ENCODE measurements at regions of chr21 and their contacts with region 1.

Region 1: GRCh38 chr21:45820171-45821091 is 161.1 kb upstream of the COL6A1 start:
- DNase-seq: peak; percentile 91
- ATAC-seq: peak; percentile 84
- H3K4me3 ChIP-seq: no peak overlapping the region
- H3K27ac ChIP-seq: no peak overlapping the region; the same call in 1 of the 2 replicates
- H3K4me1 ChIP-seq: peaks cover 16% of the 10 kb centered on the region
- H3K27me3 ChIP-seq: no peaks in the 10 kb centered on the region; the same call in 1 of the 2 replicates
- CTCF ChIP-seq: peak; percentile 98
- POLR2A ChIP-seq: no peak
- RAD21 ChIP-seq: peak; percentile 97

Region 2: GRCh38 chr21:45287438-45288391 is 532.7 kb before region 1 on chr21 and contains the start of gene POFUT2:
- CTCF ChIA-PET with region 1: no interaction called
- POLR2A ChIA-PET with region 1: no interaction called
- dilution Hi-C with region 1: no loop called
- in situ Hi-C with region 1: loop called (anchors 5 kb)
- intact Hi-C with region 1: loop called (anchors 1 kb)
- DNase-seq: peak; percentile 92
- ATAC-seq: peak; percentile 75
- H3K4me3 ChIP-seq: peak within 1 kb of the TSS; percentile 93
- H3K27ac ChIP-seq: peak within 1 kb of the TSS; percentile 97
- H3K4me1 ChIP-seq: peaks cover 11% of the 10 kb centered on the region
- H3K27me3 ChIP-seq: no peaks in the 10 kb centered on the region
- CTCF ChIP-seq: 0 out of 2 replicates have a peak, but pooled peaks have one; percentile 15
- POLR2A ChIP-seq: peak; percentile 96
- RAD21 ChIP-seq: no peak
- total RNA-seq, gene POFUT2: 18.8 and 23.9 TPM in 2 replicates

Region 3: DNA sequence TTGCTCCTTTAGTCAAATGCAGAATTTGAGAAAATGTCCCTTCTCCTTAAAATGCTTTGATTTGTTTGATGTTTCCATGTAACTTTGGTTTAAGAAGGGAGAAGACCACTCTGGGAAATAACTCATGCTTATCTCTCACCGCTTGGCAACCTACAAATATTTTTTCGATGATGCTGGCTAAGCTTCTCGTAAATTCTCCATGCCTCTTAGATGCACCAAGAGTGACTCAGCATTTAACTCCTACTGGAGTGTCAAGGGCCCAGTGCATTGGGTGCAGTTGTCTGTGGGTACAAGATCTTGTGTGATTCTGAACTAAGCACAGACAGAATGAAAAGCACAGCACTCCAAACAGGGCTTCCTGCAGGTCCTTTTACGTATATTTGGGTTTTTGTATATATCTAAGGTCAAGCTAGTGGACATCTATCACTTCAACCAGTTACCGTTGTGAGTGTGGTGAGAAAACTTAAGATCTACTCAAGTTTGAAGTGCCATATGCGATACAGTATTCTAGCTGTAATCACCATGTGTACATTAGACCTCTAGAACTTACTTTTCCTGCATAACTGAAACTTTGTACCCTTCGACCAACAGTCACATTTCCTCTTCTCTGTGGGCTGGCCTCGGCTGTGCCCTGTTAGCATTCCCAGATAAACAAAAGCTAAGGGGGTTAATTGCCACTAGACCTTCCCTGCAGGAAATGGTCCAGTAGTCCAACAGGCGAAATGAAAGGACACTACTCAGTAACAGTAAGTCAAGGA is 359.6 kb before region 1 on chr21:
- CTCF ChIA-PET with region 1: no interaction called
- POLR2A ChIA-PET with region 1: no interaction called
- dilution Hi-C with region 1: no loop called
- in situ Hi-C with region 1: loop called (anchors 10 kb)
- intact Hi-C with region 1: no loop called
- DNase-seq: peak; percentile 91
- ATAC-seq: peak; percentile 88
- H3K4me3 ChIP-seq: no peak overlapping the region
- H3K27ac ChIP-seq: peak overlapping the region; percentile 83
- H3K4me1 ChIP-seq: peaks cover 30% of the 10 kb centered on the region
- H3K27me3 ChIP-seq: no peaks in the 10 kb centered on the region
- CTCF ChIP-seq: no peak
- POLR2A ChIP-seq: no peak
- RAD21 ChIP-seq: peak; percentile 10; the same call in 1 of the 2 replicates

Region 4: GRCh38 chr21:45554477-45555175 is 265.8 kb before region 1 on chr21:
- CTCF ChIA-PET with region 1: interaction called, 5 read pairs
- POLR2A ChIA-PET with region 1: no interaction called
- dilution Hi-C with region 1: no loop called
- in situ Hi-C with region 1: loop called (anchors 5 kb)
- intact Hi-C with region 1: loop called (anchors 1 kb)
- DNase-seq: peak; percentile 48
- ATAC-seq: peak; percentile 83
- H3K4me3 ChIP-seq: peak overlapping the region; percentile 84
- H3K27ac ChIP-seq: peak overlapping the region; percentile 56
- H3K4me1 ChIP-seq: peaks cover 2% of the 10 kb centered on the region; the same call in 1 of the 2 replicates
- H3K27me3 ChIP-seq: no peaks in the 10 kb centered on the region
- CTCF ChIP-seq: peak; percentile 78
- POLR2A ChIP-seq: peak; percentile 32; the same call in 1 of the 2 replicates
- RAD21 ChIP-seq: peak; percentile 60

Region 5: GRCh38 chr21:45618287-45618686 is 202.1 kb before region 1 on chr21:
- CTCF ChIA-PET with region 1: no interaction called
- POLR2A ChIA-PET with region 1: no interaction called
- dilution Hi-C with region 1: no loop called
- in situ Hi-C with region 1: no loop called
- intact Hi-C with region 1: no loop called
- DNase-seq: peak; percentile 47
- ATAC-seq: peak; percentile 70
- H3K4me3 ChIP-seq: no peak overlapping the region
- H3K27ac ChIP-seq: no peak overlapping the region
- H3K4me1 ChIP-seq: peaks cover 6% of the 10 kb centered on the region; the same call in 1 of the 2 replicates
- H3K27me3 ChIP-seq: peaks cover 46% of the 10 kb centered on the region
- CTCF ChIP-seq: no peak
- POLR2A ChIP-seq: no peak
- RAD21 ChIP-seq: no peak

Region 6: GRCh38 chr21:45853703-45854342 is 33.4 kb after region 1 on chr21:
- CTCF ChIA-PET with region 1: no interaction called
- POLR2A ChIA-PET with region 1: no interaction called
- dilution Hi-C with region 1: no loop called
- in situ Hi-C with region 1: no loop called
- intact Hi-C with region 1: no loop called
- DNase-seq: no peak
- ATAC-seq: no peak
- H3K4me3 ChIP-seq: no peak overlapping the region
- H3K27ac ChIP-seq: no peak overlapping the region
- H3K4me1 ChIP-seq: no peaks in the 10 kb centered on the region
- H3K27me3 ChIP-seq: no peaks in the 10 kb centered on the region
- CTCF ChIP-seq: no peak
- POLR2A ChIP-seq: no peak
- RAD21 ChIP-seq: no peak

Region 7: GRCh38 chr21:45880097-45881068 is 60.0 kb after region 1 on chr21:
- CTCF ChIA-PET with region 1: no interaction called
- POLR2A ChIA-PET with region 1: no interaction called
- dilution Hi-C with region 1: no loop called
- in situ Hi-C with region 1: no loop called
- intact Hi-C with region 1: loop called (anchors 5 kb)
- DNase-seq: peak; percentile 58
- ATAC-seq: peak; percentile 64
- H3K4me3 ChIP-seq: no peak overlapping the region
- H3K27ac ChIP-seq: no peak overlapping the region
- H3K4me1 ChIP-seq: peaks cover 34% of the 10 kb centered on the region
- H3K27me3 ChIP-seq: no peaks in the 10 kb centered on the region
- CTCF ChIP-seq: peak; percentile 56
- POLR2A ChIP-seq: no peak
- RAD21 ChIP-seq: peak; percentile 51

Measured in IMR-90 (cell line).